Naive thymus-derived CD4-positive, alpha-beta T cell (primary cell): ENCODE measurements at regions of chr19 and their contacts with region 1.

Region 1: GRCh38 chr19:38315657-38316476 is at the start of gene YIF1B:
- DNase-seq: peak; percentile 93 to 97 (median 95)
- ATAC-seq: peak; percentile 95
- H3K4me3 ChIP-seq: peak within 1 kb of the TSS; percentile 90
- H3K4me3 Mint-ChIP-seq: peak within 1 kb of the TSS; percentile 87 to 96 (median 91)
- H3K27ac ChIP-seq: peak within 1 kb of the TSS; percentile 97
- H3K27ac Mint-ChIP-seq: peak within 1 kb of the TSS; percentile 90 to 97 (median 93)
- H3K4me1 ChIP-seq: peaks cover 14 to 30% of the 10 kb centered on the region in 2 donors
- H3K4me1 Mint-ChIP-seq: peaks cover 29 to 57% (median 48%) of the 10 kb centered on the region in 7 donors
- H3K27me3 ChIP-seq: no peaks in the 10 kb centered on the region
- H3K27me3 Mint-ChIP-seq: no peaks in the 10 kb centered on the region
- total RNA-seq, gene YIF1B: 26.1 to 84.7 (median 38.0) TPM

Region 2: DNA sequence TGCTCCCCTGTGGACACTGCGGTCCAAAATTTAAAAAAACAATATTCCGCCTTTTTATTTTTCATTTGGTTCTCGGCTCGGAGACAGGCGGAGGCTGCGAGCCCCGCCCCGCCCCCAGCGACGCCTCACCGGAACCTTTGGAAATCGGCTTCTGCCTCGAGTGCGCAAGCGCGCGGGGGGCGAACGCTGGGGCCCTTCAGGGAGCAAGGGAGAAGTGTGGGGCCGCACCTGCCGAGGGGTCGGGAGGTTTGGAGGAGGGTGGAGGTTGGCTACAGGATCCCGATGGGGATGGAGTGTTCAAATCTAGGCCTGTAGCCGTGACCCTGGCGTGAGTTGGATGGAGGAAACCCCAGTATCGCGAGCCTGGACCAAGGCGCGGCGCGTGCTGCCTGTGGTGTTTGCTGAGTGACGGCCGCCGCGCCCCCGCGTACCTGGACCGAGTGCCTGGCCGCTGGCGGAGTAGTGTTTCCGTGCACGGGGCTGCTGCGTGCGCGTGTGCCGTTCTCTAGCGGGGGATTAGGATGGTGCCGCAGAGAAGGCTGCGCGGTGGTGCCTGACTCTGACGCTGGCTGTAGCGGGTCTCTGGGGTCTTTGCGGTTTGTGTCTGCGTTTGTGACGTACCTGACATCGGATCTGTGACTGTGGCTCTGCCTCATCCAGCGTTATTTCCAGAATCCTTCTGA is 660.0 kb before region 1 on chr19:
- CTCF ChIA-PET with region 1: no interaction called
- POLR2A ChIA-PET with region 1: no interaction called
- intact Hi-C with region 1: loop called in 1 of 2 experiments (anchors 10 kb)
- DNase-seq: peak; percentile 74 to 90 (median 86)
- ATAC-seq: peak; percentile 86
- H3K4me3 ChIP-seq: peak overlapping the region; percentile 95
- H3K4me3 Mint-ChIP-seq: peak overlapping the region; percentile 82 to 99 (median 96)
- H3K27ac ChIP-seq: peak overlapping the region; percentile 89
- H3K27ac Mint-ChIP-seq: peak overlapping the region; percentile 81 to 99 (median 97)
- H3K4me1 ChIP-seq: peaks cover 8 to 16% of the 10 kb centered on the region in 2 donors
- H3K4me1 Mint-ChIP-seq: peaks cover 28 to 40% (median 33%) of the 10 kb centered on the region in 7 donors
- H3K27me3 ChIP-seq: no peaks in the 10 kb centered on the region
- H3K27me3 Mint-ChIP-seq: peaks cover 0 to 3% (median 0%) of the 10 kb centered on the region in 5 donors

Region 3: GRCh38 chr19:38245826-38246498 is 69.9 kb before region 1 on chr19:
- CTCF ChIA-PET with region 1: interaction called, 5 read pairs
- POLR2A ChIA-PET with region 1: no interaction called
- intact Hi-C with region 1: loop called (anchors 5 kb)
- DNase-seq: no peak
- ATAC-seq: no peak
- H3K4me3 ChIP-seq: no peak overlapping the region
- H3K4me3 Mint-ChIP-seq: no peak overlapping the region
- H3K27ac ChIP-seq: no peak overlapping the region
- H3K27ac Mint-ChIP-seq: peak overlapping the region in 1 of 9 donors; percentile 33
- H3K4me1 ChIP-seq: peaks cover 0 to 3% of the 10 kb centered on the region in 2 donors
- H3K4me1 Mint-ChIP-seq: peaks cover 4 to 14% (median 5%) of the 10 kb centered on the region in 7 donors
- H3K27me3 ChIP-seq: no peaks in the 10 kb centered on the region
- H3K27me3 Mint-ChIP-seq: peaks cover 0 to 5% (median 0%) of the 10 kb centered on the region in 5 donors

Region 4: DNA sequence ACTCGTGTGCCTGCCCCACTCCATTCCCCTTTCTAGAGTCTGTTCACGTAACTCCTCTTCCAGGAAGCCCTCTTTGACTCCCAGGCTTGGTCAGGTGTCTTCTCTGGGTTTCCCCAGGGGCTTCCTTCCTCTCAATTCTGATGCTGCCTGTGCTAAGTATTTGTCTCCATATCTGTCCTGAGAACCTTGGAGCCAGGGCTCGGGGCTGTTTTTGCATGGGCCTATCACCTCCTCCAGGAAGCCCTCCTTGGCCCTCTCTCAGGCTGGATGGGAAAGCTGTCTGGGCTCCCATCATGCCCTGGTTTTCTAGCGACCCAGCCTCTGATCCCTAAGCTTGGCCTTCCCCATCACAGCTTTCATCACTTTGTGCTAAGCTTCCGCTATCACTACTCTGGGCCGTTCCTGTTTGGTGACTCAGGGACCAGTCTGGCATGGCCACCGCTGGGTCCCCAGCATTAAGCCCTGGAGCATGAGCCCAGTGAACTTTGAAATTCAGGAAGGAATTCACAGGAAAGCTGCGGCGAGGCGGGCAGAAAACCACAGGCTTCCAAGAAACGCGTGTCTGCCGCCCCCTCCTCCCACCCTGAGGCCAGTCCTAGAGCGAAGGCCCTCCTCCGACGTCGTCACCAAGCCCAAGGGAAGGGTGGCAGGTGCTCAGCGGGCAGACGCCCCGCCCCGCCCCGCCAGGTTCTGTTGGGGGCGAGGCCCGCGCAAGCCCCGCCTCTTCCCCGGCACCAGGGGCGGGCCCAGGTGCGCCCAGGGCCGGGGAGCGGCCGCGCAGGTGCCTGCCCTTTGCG is 52.0 kb before region 1 on chr19:
- CTCF ChIA-PET with region 1: no interaction called
- POLR2A ChIA-PET with region 1: interaction called, 4 read pairs
- intact Hi-C with region 1: loop called (anchors 1 kb)
- DNase-seq: peak; percentile 71 to 89 (median 80)
- ATAC-seq: peak; percentile 93
- H3K4me3 ChIP-seq: peak overlapping the region; percentile 77
- H3K4me3 Mint-ChIP-seq: peak overlapping the region; percentile 81 to 93 (median 88)
- H3K27ac ChIP-seq: peak overlapping the region; percentile 77
- H3K27ac Mint-ChIP-seq: peak overlapping the region in 8 of 9 donors; percentile 52 to 93 (median 70)
- H3K4me1 ChIP-seq: peaks cover 4 to 10% of the 10 kb centered on the region in 2 donors
- H3K4me1 Mint-ChIP-seq: peaks cover 17 to 44% (median 39%) of the 10 kb centered on the region in 7 donors
- H3K27me3 ChIP-seq: no peaks in the 10 kb centered on the region
- H3K27me3 Mint-ChIP-seq: peaks cover 0 to 5% (median 2%) of the 10 kb centered on the region in 5 donors

Region 5: DNA sequence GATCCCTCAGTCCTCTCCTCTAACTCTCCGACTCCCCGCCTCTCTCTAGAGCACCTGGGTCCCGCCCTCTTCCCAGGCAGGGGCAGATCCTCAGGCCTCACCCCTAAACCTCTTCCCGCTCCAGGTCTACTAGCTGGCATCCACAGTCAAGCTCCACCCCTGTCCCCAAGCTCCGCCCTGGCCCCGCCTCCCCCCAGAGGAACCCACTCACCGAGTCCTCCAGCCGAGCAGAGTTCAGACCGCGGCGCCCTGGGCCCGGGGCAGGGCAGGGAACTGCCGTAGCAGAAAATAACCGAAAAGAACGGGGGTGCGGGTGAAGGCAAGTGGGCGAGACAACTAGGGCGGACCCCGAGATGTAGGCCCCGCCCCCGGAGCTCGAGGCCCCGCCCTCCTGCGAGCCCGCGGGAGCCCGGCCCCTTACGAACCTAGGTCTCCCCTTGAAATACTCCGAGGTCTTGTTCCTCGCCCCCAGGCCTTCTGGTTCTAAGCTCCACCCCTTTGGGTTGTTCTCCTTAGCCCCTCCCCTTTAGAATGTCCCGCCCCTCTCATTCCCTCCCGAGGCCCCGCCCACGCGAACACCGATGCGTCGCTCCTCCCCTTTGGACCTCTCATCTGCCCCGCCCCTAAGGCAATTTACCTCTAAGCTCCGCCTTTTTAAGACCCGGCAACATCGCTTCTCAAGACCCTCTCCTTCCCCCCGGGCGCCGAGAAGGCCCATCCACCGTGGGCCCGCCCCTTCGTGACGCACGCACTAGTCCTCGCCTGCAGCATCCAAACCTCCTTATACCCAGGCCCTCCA is 71.9 kb after region 1 on chr19 and contains the start of gene GGN:
- CTCF ChIA-PET with region 1: no interaction called
- POLR2A ChIA-PET with region 1: no interaction called
- intact Hi-C with region 1: loop called (anchors 1 to 5 kb)
- DNase-seq: peak; percentile 60 to 83 (median 72)
- ATAC-seq: peak; percentile 83
- H3K4me3 ChIP-seq: peak within 1 kb of the TSS; percentile 74
- H3K4me3 Mint-ChIP-seq: peak within 1 kb of the TSS; percentile 81 to 95 (median 91)
- H3K27ac ChIP-seq: no peak within 1 kb of the TSS
- H3K27ac Mint-ChIP-seq: peak within 1 kb of the TSS in 8 of 9 donors; percentile 43 to 95 (median 84)
- H3K4me1 ChIP-seq: peaks cover 13 to 34% of the 10 kb centered on the region in 2 donors
- H3K4me1 Mint-ChIP-seq: peaks cover 5 to 26% (median 21%) of the 10 kb centered on the region in 7 donors
- H3K27me3 ChIP-seq: no peaks in the 10 kb centered on the region
- H3K27me3 Mint-ChIP-seq: peaks cover 6 to 41% (median 30%) of the 10 kb centered on the region in 5 donors
- total RNA-seq, gene GGN: 0.29 to 0.60 (median 0.39) TPM in 3 of 5 experiments, not detected in the others

Region 6: DNA sequence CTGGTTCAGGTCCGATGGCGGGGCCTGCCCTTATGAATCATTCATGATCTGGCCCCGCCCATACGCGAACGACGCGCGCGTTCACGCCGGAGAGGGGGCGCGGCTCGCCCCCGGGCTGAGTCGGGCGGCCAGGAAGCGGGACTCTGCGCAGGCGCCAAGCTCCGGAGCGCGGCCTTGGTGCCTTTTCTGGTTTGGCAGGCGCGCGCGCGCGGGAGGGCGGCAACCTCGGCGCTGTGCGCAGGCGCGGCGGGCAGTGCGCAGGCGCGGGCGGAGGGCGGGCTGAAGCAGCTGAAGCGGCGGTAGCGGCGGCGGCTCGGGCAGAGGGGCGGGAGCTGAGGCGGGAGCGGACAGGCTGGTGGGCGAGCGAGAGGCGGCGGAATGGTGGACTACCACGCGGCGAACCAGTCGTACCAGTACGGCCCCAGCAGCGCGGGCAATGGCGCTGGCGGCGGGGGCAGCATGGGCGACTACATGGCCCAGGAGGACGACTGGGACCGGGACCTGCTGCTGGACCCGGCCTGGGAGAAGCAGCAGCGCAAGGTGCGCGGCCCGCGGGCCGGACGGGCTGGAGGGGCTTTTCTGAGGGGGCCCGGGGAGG is 331.6 kb after region 1 on chr19 and contains the start of gene ACTN4:
- CTCF ChIA-PET with region 1: no interaction called
- POLR2A ChIA-PET with region 1: no interaction called
- intact Hi-C with region 1: loop called in 1 of 2 experiments (anchors 5 kb)
- DNase-seq: peak; percentile 98 to 100 (median 100)
- ATAC-seq: peak; percentile 98
- H3K4me3 ChIP-seq: peak within 1 kb of the TSS; percentile 85
- H3K4me3 Mint-ChIP-seq: peak within 1 kb of the TSS; percentile 74 to 99 (median 89)
- H3K27ac ChIP-seq: peak within 1 kb of the TSS; percentile 69
- H3K27ac Mint-ChIP-seq: peak within 1 kb of the TSS; percentile 74 to 87 (median 84)
- H3K4me1 ChIP-seq: peaks cover 20 to 27% of the 10 kb centered on the region in 2 donors
- H3K4me1 Mint-ChIP-seq: peaks cover 20 to 52% (median 33%) of the 10 kb centered on the region in 7 donors
- H3K27me3 ChIP-seq: peaks cover 0 to 17% of the 10 kb centered on the region in 2 donors
- H3K27me3 Mint-ChIP-seq: peaks cover 0 to 33% (median 19%) of the 10 kb centered on the region in 5 donors
- total RNA-seq, gene ACTN4: 49.2 to 355 (median 54.4) TPM